Mammary epithelial cell (primary cell): ENCODE measurements at regions of chr7 and their contacts with region 1.

Region 1: DNA sequence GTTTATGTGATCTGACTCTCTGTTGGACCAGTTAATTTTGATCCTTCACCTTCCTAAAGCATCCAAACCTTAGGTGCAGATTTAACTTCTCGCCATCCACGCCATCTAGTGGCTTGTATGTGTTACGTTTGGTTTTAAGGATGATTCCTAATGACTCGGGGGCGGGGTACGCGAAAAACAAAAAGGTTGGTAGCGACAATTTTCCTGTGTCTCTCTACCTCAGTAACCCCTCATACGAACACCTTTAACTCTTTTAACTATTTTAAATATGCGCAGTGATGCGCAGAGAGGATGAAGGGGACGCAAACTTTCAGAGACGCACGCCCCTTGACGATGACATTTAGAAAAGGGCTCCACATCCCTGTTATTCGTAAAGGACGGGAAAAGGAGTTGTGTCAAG is 714 bp upstream of the KCND2 start:
- DNase-seq: peak; percentile 29
- H3K4me3 ChIP-seq: peak overlapping the region; percentile 24 to 43 (median 38)
- H3K27ac ChIP-seq: no peak overlapping the region
- H3K4me1 ChIP-seq: peaks cover 8% of the 10 kb centered on the region
- H3K27me3 ChIP-seq: peaks cover 10% of the 10 kb centered on the region
- CTCF ChIP-seq: peak; percentile 58 to 77

Region 2: GRCh38 chr7:119270045-119270464 is 1002.2 kb before region 1 on chr7:
- CTCF ChIA-PET with region 1: no interaction called
- dilution Hi-C with region 1: no loop called
- in situ Hi-C with region 1: loop called in 1 of 2 experiments (anchors 25 kb)
- intact Hi-C with region 1: loop called (anchors 5 kb)
- DNase-seq: peak; percentile 50
- H3K4me3 ChIP-seq: no peak overlapping the region
- H3K27ac ChIP-seq: no peak overlapping the region
- H3K4me1 ChIP-seq: peaks cover 6% of the 10 kb centered on the region
- H3K27me3 ChIP-seq: no peaks in the 10 kb centered on the region
- CTCF ChIP-seq: peak; percentile 91